ENCODE measurements at regions of chr1 and their contacts with region 1.

Region 1: DNA sequence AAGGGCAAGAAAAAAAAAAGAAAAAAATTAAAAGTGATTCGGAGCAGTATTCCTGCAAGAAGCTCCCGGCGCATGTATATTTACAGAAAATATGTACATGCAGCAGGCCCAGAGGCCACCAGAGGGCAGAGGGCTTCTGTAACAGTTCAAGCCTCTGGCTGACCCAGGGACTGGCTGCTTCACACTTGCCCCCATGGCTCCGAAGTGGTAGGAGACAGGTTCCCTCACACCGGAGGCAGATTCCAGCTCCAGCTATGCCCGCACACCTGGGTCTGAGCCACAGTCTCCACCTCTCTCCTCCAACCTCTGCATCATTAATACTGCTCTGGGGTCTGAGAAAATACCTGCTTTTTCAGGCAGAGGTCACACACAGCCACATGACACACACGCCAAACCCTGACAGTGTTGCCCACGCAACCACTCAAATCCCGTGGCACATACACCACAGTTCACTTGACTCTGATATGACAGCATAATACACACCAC is 2.2 kb upstream of the ARHGAP30 start:
- DNase-seq: no peak
- H3K4me3 ChIP-seq: no peak overlapping the region
- CTCF ChIP-seq: peak; percentile 50

Region 2: GRCh38 chr1:161082991-161083742 is 11.2 kb after region 1 on chr1:
- CTCF ChIA-PET with region 1: interaction called, 21 read pairs
- POLR2A ChIA-PET with region 1: no interaction called
- DNase-seq: no peak
- H3K4me3 ChIP-seq: no peak overlapping the region
- CTCF ChIP-seq: no peak

Measured in AG04449 (cell line).